Transverse colon (tissue), 4 donors: ENCODE measurements at regions of chr20 and their contacts with region 1.

Region 1: GRCh38 chr20:47304287-47304686 is 52.2 kb downstream of the ZMYND8 start:
- DNase-seq: peak; percentile 43
- H3K4me3 ChIP-seq: no peak overlapping the region
- H3K27ac ChIP-seq: peak overlapping the region; percentile 70 to 85 (median 76)
- H3K4me1 ChIP-seq: peaks cover 9 to 25% (median 22%) of the 10 kb centered on the region in 4 donors
- H3K27me3 ChIP-seq: no peaks in the 10 kb centered on the region
- CTCF ChIP-seq: peak; percentile 34 to 75 (median 43)
- EP300 ChIP-seq: no peak
- POLR2A ChIP-seq: no peak

Region 2: GRCh38 chr20:46558511-46558959 is 745.8 kb before region 1 on chr20:
- in situ Hi-C with region 1: no loop called
- intact Hi-C with region 1: no loop called
- DNase-seq: no peak
- H3K4me3 ChIP-seq: no peak overlapping the region
- H3K27ac ChIP-seq: no peak overlapping the region
- H3K4me1 ChIP-seq: peaks cover 0 to 10% (median 2%) of the 10 kb centered on the region in 4 donors
- H3K27me3 ChIP-seq: no peaks in the 10 kb centered on the region
- CTCF ChIP-seq: no peak
- EP300 ChIP-seq: no peak
- POLR2A ChIP-seq: no peak

Region 3: GRCh38 chr20:47173596-47174216 is 130.6 kb before region 1 on chr20:
- in situ Hi-C with region 1: no loop called
- intact Hi-C with region 1: no loop called
- DNase-seq: no peak
- H3K4me3 ChIP-seq: no peak overlapping the region
- H3K27ac ChIP-seq: no peak overlapping the region
- H3K4me1 ChIP-seq: no peaks in the 10 kb centered on the region
- H3K27me3 ChIP-seq: no peaks in the 10 kb centered on the region
- CTCF ChIP-seq: no peak
- EP300 ChIP-seq: no peak
- POLR2A ChIP-seq: no peak

Region 4: GRCh38 chr20:47347661-47348435 is 43.6 kb after region 1 on chr20:
- in situ Hi-C with region 1: no loop called
- intact Hi-C with region 1: loop called (anchors 1 kb)
- DNase-seq: no peak
- H3K4me3 ChIP-seq: no peak overlapping the region
- H3K27ac ChIP-seq: peak overlapping the region; percentile 99 to 100 (median 100)
- H3K4me1 ChIP-seq: peaks cover 54 to 79% (median 59%) of the 10 kb centered on the region in 4 donors
- H3K27me3 ChIP-seq: no peaks in the 10 kb centered on the region
- CTCF ChIP-seq: no peak
- EP300 ChIP-seq: no peak
- POLR2A ChIP-seq: no peak

Region 5: DNA sequence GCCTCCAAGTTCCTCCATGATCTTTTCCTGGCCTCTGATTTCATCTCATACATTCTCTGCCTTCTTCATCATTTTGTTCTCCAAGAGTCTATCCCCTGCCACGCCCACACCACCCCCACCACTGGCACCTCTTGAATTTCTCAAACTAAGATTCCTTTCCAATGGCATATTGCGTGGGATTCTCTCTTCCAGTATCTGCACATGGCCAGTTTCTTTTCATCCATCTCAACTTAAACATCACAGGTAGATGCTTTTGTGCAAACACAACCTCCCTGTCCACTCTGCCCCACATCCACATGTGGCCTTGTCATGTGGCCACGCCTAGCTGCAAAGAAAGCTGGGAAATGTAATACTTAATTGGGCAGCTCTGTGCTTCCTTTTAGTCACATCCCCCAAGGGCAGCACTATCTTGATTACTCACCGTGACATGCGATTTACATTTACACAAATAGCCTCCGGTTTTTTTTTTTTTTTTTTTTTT is 85.6 kb after region 1 on chr20:
- in situ Hi-C with region 1: no loop called
- intact Hi-C with region 1: no loop called
- DNase-seq: no peak
- H3K4me3 ChIP-seq: no peak overlapping the region
- H3K27ac ChIP-seq: no peak overlapping the region
- H3K4me1 ChIP-seq: no peaks in the 10 kb centered on the region
- H3K27me3 ChIP-seq: no peaks in the 10 kb centered on the region
- CTCF ChIP-seq: no peak
- EP300 ChIP-seq: no peak
- POLR2A ChIP-seq: no peak